Activated CD8-positive, alpha-beta T cell treated with anti-CD3 and anti-CD28 coated beads for 36 hours (primary cell): ENCODE measurements at regions of chr11 and their contacts with region 1.

Region 1: DNA sequence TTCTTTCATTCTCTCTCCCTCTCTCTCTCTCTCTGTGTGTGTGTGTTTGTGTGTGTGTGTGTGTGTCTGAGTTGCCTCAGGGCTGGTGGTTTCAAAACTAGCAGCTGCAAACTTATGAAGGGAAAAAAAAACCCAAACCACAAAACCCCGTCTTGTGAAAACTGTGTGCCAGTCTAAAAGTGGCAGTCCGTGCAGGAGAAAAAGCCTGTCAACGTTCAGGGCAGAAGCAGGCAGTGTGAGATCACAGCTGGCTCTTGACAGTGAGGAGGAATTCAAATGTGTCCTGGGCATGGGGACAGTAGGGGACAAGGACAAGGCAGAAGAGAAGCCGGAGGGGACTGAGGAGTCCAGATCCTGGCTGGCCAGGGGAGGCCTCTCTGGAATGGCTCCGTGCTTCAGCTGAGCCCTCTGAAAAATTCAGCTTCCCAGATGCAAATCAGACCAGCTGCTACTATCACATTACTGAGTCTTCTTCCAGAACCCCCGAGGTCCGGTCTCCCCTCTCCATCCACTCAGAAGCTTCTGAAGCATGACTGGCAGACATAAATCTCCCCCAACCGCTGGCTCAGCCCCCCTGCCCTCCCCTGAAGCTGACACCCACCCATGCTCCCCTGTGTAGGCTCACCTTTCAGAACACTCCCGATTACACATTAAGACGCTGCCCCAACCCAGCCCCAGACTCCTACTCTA is 31.9 kb downstream of the FLI1 start:
- DNase-seq: peak; percentile 74
- ATAC-seq: peak; percentile 53
- H3K4me3 Mint-ChIP-seq: peak overlapping the region; percentile 58
- H3K27ac Mint-ChIP-seq: peak overlapping the region; percentile 87
- H3K4me1 Mint-ChIP-seq: peaks cover 96% of the 10 kb centered on the region
- H3K27me3 Mint-ChIP-seq: no peaks in the 10 kb centered on the region
- CTCF ChIP-seq: no peak

Region 2: DNA sequence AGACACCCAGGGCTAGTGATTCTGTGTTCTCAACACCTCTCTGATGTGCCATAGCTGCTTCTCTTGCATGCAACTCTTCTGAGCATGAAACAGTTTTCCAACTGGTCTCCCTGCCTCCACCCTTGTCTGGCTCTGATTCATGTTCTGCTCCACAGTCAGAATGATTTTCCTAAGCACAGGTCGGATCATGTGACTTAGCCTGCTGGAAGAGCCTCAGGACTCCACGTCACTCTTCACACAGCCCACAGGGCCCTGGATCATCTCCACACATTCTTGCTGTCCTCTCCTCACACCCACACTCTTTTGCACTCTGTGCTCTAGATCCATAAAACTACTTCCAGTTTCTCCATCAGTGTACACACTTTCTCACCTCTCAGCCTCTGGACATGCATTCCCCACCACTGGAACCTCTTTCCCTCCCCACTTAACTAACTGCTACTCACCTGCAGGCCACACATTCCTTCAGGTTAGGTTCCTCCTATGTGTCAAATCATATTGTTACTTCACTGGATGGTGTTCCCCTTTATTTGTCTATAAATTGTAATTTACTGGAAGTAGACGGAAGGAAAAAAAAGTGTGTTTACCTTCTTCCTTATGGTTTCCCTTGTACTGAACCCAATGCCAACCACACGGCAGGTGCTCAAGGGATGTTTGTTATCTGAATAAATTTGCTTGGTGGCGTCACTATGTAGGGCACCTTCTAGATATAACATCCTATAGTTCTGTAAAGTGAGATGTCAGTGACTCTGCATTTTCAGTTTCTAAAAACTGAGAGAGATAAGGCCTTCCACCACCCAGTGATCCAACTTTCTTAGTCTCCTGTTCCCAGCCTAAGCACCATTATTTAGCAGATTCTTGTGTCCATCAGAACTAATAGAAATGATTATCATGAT is 272.1 kb before region 1 on chr11:
- CTCF ChIA-PET with region 1: no interaction called
- POLR2A ChIA-PET with region 1: no interaction called
- intact Hi-C with region 1: no loop called
- DNase-seq: no peak
- ATAC-seq: peak; percentile 18
- H3K4me3 Mint-ChIP-seq: no peak overlapping the region
- H3K27ac Mint-ChIP-seq: peak overlapping the region; percentile 77
- H3K4me1 Mint-ChIP-seq: peaks cover 76% of the 10 kb centered on the region
- H3K27me3 Mint-ChIP-seq: no peaks in the 10 kb centered on the region
- CTCF ChIP-seq: no peak

Region 3: DNA sequence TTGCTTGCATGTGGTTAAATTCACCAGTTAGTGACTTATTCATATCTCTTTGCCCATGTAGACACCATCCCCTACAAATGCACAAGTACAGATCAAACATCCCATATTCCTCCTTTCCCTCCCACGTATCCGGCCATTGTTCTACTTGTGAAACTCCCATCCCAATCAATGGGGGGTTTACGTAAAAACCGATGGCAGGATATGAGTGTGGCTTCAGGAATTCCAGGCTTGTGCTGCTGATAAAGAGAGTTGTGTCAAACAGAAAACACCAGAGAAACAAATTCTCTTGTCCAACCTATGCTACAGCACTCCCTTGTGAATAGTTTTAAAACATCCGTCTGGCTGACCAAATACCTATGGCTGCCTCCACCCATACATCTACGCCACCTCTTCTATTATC is 16.4 kb before region 1 on chr11:
- CTCF ChIA-PET with region 1: interaction called, 4 read pairs
- POLR2A ChIA-PET with region 1: interaction called, 15 read pairs
- intact Hi-C with region 1: no loop called
- DNase-seq: no peak
- ATAC-seq: no peak
- H3K4me3 Mint-ChIP-seq: no peak overlapping the region
- H3K27ac Mint-ChIP-seq: peak overlapping the region; percentile 11
- H3K4me1 Mint-ChIP-seq: peaks cover 92% of the 10 kb centered on the region
- H3K27me3 Mint-ChIP-seq: no peaks in the 10 kb centered on the region
- CTCF ChIP-seq: no peak

Region 4: GRCh38 chr11:128772814-128773213 is 47.0 kb after region 1 on chr11:
- CTCF ChIA-PET with region 1: no interaction called
- POLR2A ChIA-PET with region 1: no interaction called
- intact Hi-C with region 1: no loop called
- DNase-seq: peak; percentile 63
- ATAC-seq: peak; percentile 53
- H3K4me3 Mint-ChIP-seq: no peak overlapping the region
- H3K27ac Mint-ChIP-seq: peak overlapping the region; percentile 84
- H3K4me1 Mint-ChIP-seq: peaks cover 40% of the 10 kb centered on the region
- H3K27me3 Mint-ChIP-seq: no peaks in the 10 kb centered on the region
- CTCF ChIP-seq: no peak